ENCODE measurements at regions of chrX and their contacts with region 1.

Region 1: GRCh38 chrX:53433651-53434639 is at the start of gene HSD17B10:
- DNase-seq: peak; percentile 77 to 90 (median 80)
- ATAC-seq: peak; percentile 98
- H3K4me3 Mint-ChIP-seq: peak within 1 kb of the TSS; percentile 92 to 99 (median 96)
- H3K27ac Mint-ChIP-seq: peak within 1 kb of the TSS; percentile 90 to 99 (median 97)
- H3K4me1 Mint-ChIP-seq: peaks cover 5 to 24% (median 16%) of the 10 kb centered on the region in 4 donors
- H3K27me3 Mint-ChIP-seq: peaks cover 0 to 5% (median 0%) of the 10 kb centered on the region in 5 donors
- polyA plus RNA-seq, gene HSD17B10: 144 to 152 (median 148) TPM

Region 2: DNA sequence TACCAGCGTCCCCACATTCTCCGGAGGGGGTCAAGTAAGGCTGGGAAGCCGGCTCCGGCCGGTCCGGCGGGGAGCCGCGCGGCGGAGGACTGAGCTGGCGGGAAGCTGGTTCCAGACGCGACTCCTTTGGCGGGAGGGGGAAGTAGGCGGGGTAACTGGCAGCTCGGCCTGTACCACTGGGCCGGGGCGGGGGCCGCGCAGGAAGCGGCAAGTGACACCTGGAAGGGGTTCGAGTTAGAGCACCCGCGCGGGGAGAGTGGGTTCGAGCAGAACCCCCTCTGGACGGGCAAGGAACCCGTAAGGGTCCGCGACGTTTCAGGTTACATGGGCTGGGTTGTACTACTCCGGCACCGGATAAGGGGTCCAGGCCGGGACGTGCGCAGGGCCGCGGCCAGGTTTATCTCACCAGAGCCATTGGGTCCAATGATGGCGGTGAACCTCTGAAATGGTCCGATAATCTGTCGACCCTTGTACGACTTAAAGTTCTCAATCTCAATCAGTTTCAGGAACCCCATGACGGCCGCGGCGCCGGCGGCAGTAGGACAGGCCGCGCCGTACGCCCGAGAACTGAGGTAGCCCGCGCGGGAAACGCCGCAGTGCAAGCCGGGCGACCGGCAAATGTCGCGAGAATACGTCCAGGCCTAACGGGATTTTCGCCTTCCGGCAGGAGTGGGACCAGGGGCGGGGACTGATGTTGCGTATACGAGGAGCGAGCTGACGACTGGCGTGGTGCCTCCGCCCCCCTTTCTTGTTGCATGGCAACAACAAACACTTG is 11.7 kb before region 1 on chrX and contains the start of gene SMC1A:
- POLR2A ChIA-PET with region 1: interaction called, 13 read pairs
- DNase-seq: peak; percentile 83 to 99 (median 96)
- ATAC-seq: peak; percentile 87 to 89
- H3K4me3 Mint-ChIP-seq: peak within 1 kb of the TSS; percentile 87 to 98 (median 94)
- H3K27ac Mint-ChIP-seq: peak within 1 kb of the TSS; percentile 88 to 100 (median 99)
- H3K4me1 Mint-ChIP-seq: peaks cover 13 to 37% (median 34%) of the 10 kb centered on the region in 4 donors
- H3K27me3 Mint-ChIP-seq: no peaks in the 10 kb centered on the region
- polyA plus RNA-seq, gene SMC1A: 52.3 to 65.3 (median 55.4) TPM